Activated naive CD4-positive, alpha-beta T cell treated with anti-CD3 and anti-CD28 coated beads for 36 hours (primary cell): ENCODE measurements at regions of chr11 and their contacts with region 1.

Region 1: GRCh38 chr11:47454180-47454644 is 5.3 kb upstream of the RAPSN start:
- DNase-seq: peak; percentile 85
- H3K4me3 Mint-ChIP-seq: no peak overlapping the region
- H3K27ac Mint-ChIP-seq: no peak overlapping the region
- H3K4me1 Mint-ChIP-seq: peaks cover 2% of the 10 kb centered on the region
- H3K27me3 Mint-ChIP-seq: no peaks in the 10 kb centered on the region

Region 2: DNA sequence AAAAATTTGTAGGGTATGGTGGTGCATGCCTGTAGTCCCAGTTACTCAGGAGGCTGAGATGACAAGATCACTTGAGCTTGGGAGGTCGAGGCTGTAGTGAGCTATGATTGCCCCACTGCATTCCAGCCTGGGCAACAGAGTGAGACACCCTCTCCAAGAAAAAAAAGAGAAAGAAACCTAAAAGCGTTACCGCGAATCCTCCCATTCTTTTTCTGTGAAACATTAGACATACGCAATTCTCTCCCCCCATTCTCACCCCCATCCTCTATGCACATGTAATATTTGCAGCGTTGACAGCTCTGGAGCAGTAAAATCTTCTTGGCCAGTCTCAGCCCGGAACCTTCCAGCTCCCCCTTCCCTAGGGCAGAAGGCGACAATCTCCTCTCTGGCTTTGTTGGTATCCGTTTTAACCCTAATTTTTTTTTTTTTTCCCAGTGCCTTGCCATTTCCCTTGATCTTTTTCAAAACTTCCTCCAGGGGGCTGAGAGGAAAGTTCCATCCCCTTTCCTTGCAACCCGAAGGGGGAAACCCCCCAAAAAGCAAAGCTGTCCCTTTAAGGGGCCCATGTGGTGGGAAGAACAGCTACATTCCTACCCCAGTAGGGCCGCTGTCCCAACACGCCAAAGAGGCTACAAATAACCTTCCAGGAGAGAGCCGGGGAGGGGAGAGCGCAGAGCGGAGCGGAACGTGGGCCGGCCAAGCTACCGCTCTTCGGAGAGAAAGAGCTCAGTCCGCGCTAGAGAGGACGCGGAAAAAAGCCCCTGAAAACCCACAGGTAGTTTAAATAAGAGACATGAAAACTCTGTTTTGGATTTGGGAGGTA is 537.7 kb before region 1 on chr11:
- CTCF ChIA-PET with region 1: no interaction called
- intact Hi-C with region 1: loop called (anchors 10 kb)
- DNase-seq: peak; percentile 27
- H3K4me3 Mint-ChIP-seq: peak overlapping the region; percentile 66
- H3K27ac Mint-ChIP-seq: no peak overlapping the region
- H3K4me1 Mint-ChIP-seq: peaks cover 25% of the 10 kb centered on the region
- H3K27me3 Mint-ChIP-seq: peaks cover 62% of the 10 kb centered on the region

Region 3: DNA sequence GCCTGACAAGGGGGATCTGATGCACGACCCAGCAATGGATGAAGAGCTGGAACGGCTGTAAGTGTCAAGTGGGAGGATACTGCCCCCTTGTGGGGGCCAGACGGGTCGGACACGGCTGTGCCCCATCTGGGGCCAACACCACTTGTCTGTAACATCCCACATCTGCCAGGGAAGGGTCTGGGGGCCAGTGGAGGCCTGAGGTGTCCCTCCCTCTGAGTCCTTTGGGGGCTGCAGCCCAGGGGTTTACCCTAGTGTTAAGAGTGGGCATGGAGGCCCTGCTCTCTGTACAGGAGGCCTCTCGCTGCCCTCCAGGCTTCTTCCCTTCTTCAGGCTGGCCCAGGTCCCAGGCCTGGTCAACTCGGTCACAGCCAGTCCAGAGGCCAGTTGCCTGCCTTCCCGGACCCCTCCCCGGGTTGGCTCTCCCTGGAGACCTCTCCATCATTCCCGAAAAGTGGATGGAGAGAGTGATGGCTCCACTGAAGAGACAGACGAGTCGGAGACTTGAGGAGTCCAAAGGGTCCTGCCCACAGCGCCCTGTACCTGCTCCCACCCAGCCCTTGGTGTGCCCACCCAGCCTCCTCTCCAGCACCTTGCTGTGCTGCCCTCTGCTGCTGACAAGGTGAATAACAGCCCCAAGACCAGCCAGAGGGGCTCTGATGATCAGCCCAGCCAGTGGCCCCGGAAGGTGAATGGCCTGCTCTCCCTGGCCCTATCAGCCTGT is 292.9 kb before region 1 on chr11:
- CTCF ChIA-PET with region 1: no interaction called
- intact Hi-C with region 1: loop called (anchors 5 kb)
- DNase-seq: peak; percentile 67
- H3K4me3 Mint-ChIP-seq: no peak overlapping the region
- H3K27ac Mint-ChIP-seq: no peak overlapping the region
- H3K4me1 Mint-ChIP-seq: no peaks in the 10 kb centered on the region
- H3K27me3 Mint-ChIP-seq: no peaks in the 10 kb centered on the region

Region 4: DNA sequence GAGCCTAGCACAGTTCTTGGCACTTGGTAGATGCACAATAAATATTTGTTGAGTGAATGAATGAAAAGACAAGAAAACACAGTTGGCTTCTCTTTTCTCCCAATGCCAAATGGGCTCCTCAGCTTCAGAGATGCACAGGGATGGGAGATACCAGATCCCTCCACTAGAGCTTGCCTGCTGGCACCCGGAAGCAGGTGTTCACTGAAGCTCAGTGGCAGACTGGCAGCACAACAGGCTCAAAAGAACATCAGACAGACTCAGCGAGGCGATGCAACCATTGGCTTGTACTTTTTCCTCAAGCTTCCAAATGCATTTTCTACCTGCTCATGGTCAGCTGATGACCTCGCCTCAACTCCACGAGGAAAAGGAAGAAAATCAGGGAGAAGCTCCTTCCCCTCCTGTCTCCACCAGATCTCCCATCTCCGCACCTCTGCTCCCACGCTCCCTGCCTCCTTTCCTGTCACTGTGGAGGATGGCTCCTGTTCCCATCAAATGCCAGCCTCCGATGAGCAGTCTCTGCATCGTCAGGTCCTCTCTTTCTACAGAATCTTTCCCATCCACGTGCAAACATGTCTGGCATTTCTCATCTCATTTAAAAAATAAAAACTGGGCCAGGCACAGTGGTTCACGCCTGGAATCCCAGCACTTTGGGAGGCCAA is 11.0 kb before region 1 on chr11:
- CTCF ChIA-PET with region 1: interaction called, 12 read pairs
- intact Hi-C with region 1: no loop called
- DNase-seq: no peak
- H3K4me3 Mint-ChIP-seq: no peak overlapping the region
- H3K27ac Mint-ChIP-seq: no peak overlapping the region
- H3K4me1 Mint-ChIP-seq: no peaks in the 10 kb centered on the region
- H3K27me3 Mint-ChIP-seq: no peaks in the 10 kb centered on the region